ENCODE measurements at regions of chr2 and their contacts with region 1.

Region 1: DNA sequence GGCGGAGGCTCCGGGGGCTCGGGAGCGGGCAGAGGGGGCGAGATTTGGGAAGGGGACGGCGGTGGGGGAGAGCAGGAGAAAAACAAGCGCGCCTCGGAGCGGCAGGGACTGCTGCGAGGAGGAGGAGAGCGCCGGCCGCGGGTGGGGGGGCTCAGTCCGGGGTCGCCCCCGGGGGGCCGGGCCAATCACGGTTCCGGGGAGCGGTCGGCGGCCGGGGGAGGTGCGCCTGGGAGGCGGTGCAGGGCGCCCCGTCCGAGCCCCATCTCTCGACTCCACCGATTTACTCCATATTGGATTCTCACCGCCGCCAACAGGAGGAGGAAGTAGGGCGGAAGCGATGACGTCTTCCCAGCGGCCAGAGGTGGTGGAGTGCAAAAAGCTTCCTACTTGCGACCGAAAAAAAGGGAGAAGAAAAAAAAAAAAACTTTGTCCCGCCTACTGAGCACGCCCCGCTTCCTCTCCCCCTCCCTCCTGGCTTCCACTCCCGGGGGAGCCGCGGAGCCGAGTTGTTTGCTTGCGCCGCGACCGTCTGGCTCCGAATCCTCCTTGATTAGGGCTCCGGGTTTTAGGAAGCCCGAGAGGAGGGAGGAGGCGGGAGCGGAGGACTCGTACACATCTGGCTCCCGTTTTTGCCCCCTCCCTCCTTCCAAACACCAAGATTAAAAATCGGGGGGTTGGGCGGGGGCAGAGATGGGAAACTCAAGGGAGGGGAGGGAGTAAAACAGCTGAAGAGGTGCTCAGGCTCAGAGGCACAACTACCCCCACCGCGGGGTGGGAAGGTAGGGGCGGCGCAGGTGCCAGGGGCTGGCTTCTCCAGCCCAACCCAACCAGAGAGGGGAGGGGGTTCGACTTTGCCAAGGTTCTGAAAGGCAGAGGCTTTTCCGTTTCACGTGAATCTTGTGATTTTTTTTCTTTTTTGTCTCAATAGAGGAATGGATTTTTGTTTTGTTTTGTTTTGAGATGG is at the start of gene SPRED2:
- DNase-seq: peak; percentile 73
- H3K4me3 Mint-ChIP-seq: peak within 1 kb of the TSS; percentile 87
- H3K27ac Mint-ChIP-seq: peak within 1 kb of the TSS; percentile 76
- H3K4me1 Mint-ChIP-seq: peaks cover 19% of the 10 kb centered on the region
- H3K27me3 Mint-ChIP-seq: peaks cover 46% of the 10 kb centered on the region
- total RNA-seq, gene SPRED2: 7.9 and 8.4 TPM in 2 replicates

Region 2: DNA sequence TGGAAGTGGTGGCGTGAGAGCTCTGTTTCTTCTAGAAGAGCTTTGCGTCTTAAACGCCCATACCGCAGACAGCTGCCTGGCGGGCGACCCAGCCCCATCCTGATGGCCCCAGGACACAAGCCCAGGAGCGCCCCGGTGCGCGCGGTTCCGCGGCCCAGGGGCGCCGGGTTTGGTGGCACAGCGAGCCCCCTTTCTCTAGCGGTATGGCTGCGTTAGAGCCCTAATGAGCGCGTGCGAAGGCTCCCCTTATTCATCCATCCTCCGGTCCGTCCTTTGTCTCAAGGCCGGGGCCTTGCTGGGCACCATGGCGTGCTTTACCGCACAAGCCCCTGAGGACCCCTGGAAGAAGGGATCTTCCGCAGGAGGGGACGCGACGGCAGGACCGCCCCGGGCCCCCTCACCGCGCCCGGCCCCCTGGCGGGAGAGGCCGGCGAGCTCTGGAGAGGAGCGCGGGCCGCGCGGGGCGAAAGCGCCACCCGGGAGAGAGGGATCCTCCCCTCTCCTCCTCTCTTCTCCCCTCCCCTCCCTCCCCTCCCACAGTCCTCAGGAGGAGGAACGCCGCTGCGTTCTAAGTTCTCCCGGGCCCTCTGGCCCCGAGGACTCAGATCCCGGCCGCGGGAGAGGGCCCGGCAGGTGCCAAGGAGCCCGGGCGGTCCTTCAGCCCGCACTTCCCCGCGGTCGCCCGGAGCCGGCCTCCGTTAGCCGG is 443.9 kb before region 1 on chr2:
- intact Hi-C with region 1: loop called (anchors 10 kb)
- DNase-seq: peak; percentile 80
- H3K4me3 Mint-ChIP-seq: peak overlapping the region; percentile 84
- H3K27ac Mint-ChIP-seq: peak overlapping the region; percentile 90
- H3K4me1 Mint-ChIP-seq: peaks cover 65% of the 10 kb centered on the region
- H3K27me3 Mint-ChIP-seq: peaks cover 3% of the 10 kb centered on the region

Region 3: GRCh38 chr2:65129826-65130663 is 302.5 kb before region 1 on chr2 and contains the start of gene RAB1A:
- intact Hi-C with region 1: loop called (anchors 2 kb)
- DNase-seq: peak; percentile 98
- H3K4me3 Mint-ChIP-seq: peak within 1 kb of the TSS; percentile 100
- H3K27ac Mint-ChIP-seq: peak within 1 kb of the TSS; percentile 100
- H3K4me1 Mint-ChIP-seq: peaks cover 35% of the 10 kb centered on the region
- H3K27me3 Mint-ChIP-seq: peaks cover 6% of the 10 kb centered on the region
- total RNA-seq, gene RAB1A: 88.1 and 96.6 TPM in 2 replicates

Region 4: DNA sequence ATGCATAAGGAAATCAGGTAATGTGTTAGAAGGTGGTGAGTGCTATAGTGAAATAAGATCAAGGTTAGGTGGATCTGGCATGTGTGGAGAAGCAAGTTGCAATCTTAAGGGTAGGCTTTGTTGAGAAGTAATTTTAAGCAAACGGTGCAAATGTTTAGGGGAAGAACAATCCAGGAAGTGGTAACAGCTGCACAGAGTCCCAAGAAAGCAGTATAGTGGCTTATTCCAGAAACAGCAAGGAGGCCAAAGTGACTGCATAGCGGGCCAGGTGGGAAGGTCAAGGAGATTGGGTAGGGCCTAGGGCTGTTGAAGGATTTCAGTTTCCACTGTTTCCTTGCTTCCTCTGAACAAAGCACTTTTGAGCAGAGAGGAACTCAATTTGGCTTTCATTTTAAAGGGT is 272.6 kb before region 1 on chr2:
- intact Hi-C with region 1: no loop called
- DNase-seq: no peak
- H3K4me3 Mint-ChIP-seq: no peak overlapping the region
- H3K27ac Mint-ChIP-seq: peak overlapping the region; percentile 3
- H3K4me1 Mint-ChIP-seq: peaks cover 16% of the 10 kb centered on the region
- H3K27me3 Mint-ChIP-seq: peaks cover 6% of the 10 kb centered on the region

Region 5: DNA sequence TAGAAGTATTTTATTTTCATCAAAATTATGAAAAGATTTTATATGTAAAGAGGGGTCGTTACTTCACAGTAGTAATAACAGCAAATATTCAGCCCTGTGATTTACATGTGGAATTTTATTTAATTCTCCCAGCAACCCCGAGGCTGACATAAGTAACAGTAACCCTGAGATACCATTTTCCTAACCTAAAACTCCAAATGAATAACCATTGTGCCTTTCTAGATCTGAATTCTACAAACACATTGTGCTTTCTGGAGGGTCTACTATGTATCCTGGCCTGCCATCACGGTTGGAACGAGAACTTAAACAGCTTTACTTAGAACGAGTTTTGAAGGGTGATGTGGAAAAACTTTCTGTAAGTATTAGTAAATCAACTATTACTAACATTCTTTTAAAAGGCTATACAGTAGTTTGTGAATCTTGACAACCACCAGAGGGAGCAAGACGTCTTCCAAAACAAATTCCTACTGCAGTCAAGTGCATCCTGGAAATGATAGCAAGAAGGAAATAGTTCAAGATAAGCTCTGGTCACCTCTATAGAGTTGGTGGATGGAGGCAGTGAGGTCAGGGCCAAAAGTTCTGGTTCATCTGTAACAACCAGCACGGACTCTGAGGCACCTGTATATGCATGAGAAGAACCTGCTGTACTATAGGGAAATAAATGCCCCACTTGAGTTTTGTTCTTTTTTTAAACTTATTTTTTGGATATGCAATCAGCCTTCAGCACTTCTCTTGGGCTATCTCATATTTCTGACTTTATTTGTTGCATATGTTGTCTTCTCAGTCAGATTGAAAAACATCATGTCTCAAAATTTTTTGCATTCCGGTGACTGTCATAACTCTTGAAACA is 167.5 kb before region 1 on chr2:
- intact Hi-C with region 1: loop called (anchors 10 kb)
- DNase-seq: no peak
- H3K4me3 Mint-ChIP-seq: no peak overlapping the region
- H3K27ac Mint-ChIP-seq: no peak overlapping the region
- H3K4me1 Mint-ChIP-seq: peaks cover 13% of the 10 kb centered on the region
- H3K27me3 Mint-ChIP-seq: no peaks in the 10 kb centered on the region

Region 6: GRCh38 chr2:65320042-65320725 is 112.3 kb before region 1 on chr2:
- intact Hi-C with region 1: loop called (anchors 2 kb)
- DNase-seq: no peak
- H3K4me3 Mint-ChIP-seq: no peak overlapping the region
- H3K27ac Mint-ChIP-seq: peak overlapping the region; percentile 64
- H3K4me1 Mint-ChIP-seq: peaks cover 21% of the 10 kb centered on the region
- H3K27me3 Mint-ChIP-seq: peaks cover 2% of the 10 kb centered on the region

Region 7: GRCh38 chr2:65382776-65383357 is 49.6 kb before region 1 on chr2:
- intact Hi-C with region 1: loop called (anchors 1 kb)
- DNase-seq: peak; percentile 57
- H3K4me3 Mint-ChIP-seq: no peak overlapping the region
- H3K27ac Mint-ChIP-seq: peak overlapping the region; percentile 19
- H3K4me1 Mint-ChIP-seq: peaks cover 44% of the 10 kb centered on the region
- H3K27me3 Mint-ChIP-seq: peaks cover 19% of the 10 kb centered on the region

Region 8: DNA sequence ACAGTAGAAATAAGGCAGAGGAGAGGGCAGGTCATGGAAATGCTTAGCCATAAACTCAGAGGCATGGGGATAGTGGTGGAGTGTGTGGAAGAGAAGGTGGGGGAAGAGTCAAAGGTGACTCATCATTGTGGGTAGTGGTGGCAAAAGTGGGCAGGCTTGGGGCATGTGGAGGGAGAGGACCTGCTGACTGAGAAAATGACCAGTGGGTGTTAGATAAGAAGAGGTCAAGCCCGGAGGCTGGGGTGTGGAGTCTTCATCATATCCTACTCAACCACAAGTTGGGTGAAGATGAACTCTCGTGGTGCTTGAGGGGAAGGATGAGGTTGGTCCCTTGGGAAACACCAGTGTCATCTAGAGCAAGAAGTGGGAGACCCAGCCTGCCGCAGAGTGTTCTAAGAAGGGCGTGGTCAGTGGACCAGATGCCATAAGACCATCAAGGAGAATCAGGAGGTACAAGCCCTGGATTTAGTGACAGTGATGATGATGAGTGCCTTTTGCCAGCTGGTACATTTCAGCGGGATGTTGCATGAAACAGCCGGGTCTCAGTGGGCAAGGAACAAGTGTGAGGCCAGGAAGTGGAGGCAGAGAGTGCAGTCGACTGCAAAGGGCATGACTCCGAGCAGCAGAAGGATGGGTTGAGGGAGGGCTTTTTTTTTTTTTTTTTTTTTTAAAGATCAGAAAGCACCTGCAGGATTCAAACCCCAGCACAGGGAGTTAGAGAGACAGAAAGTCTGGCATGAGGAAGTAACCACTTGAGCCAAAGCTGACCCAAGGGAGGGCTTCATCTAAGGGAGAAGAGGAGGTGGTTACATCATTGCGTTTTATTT is 122.5 kb after region 1 on chr2:
- intact Hi-C with region 1: loop called (anchors 2 kb)
- DNase-seq: no peak
- H3K4me3 Mint-ChIP-seq: no peak overlapping the region
- H3K27ac Mint-ChIP-seq: no peak overlapping the region
- H3K4me1 Mint-ChIP-seq: peaks cover 16% of the 10 kb centered on the region
- H3K27me3 Mint-ChIP-seq: peaks cover 27% of the 10 kb centered on the region